PC-3 (cell line): ENCODE measurements at regions of chr4 and their contacts with region 1.

Region 1: DNA sequence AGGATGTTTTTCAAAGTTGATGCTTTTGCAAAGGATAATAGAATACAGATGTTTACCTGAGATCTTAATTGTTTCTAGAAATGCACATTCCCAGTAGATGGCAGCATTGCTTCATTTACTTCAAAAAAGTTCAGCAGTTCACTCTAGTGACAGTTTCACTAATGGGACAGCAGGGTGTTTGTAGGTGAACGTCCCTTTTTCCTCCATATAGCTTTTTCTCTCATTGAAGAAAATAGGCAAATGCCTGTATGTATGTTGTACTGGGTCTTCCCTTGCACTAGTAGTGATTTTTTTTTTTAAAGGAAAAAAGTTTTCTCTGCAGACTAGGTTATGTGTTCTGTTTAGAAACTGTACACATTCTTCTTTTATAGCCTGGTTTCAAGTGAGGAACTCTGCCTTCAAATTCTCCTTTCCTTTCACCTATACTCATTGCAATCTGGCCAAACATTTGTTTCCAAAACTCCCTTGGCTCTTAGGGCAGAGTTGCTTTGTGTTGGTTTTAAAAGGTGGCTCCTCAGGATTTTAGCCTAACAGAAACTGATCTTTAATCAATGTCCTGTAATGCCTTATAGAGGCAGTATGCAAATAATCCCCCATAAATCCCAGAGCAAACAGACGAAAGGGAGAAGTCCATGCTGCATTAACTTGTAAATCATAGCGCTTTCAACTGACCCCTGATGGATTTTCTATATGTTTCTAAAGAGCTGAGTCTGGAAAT is 86.3 kb downstream of the EGF start:
- DNase-seq: peak; percentile 75
- ATAC-seq: peak; percentile 70
- H3K4me3 ChIP-seq: no peak overlapping the region
- H3K27ac ChIP-seq: no peak overlapping the region
- H3K4me1 ChIP-seq: no peaks in the 10 kb centered on the region
- H3K27me3 ChIP-seq: no peaks in the 10 kb centered on the region
- CTCF ChIP-seq: peak; percentile 71

Region 2: DNA sequence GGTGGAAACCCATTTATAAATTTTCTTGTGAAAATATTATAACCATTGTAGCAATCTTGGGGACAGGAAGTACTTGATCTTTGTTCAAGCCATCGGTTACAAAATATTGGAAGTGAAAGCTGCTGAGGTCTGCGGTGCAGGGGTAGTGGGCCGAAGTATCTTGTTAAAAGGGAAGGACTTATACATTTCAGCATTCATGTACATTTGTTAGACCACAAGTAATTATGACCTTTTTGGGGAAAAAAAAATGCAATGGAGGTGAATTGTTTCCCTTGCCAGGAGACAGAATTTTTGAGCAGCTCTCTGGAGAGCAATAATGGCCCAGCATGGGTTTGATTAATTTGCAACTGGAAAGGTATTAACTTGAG is 35.0 kb after region 1 on chr4:
- CTCF ChIA-PET with region 1: no interaction called
- POLR2A ChIA-PET with region 1: no interaction called
- intact Hi-C with region 1: no loop called
- DNase-seq: no peak
- ATAC-seq: no peak
- H3K4me3 ChIP-seq: no peak overlapping the region
- H3K27ac ChIP-seq: no peak overlapping the region
- H3K4me1 ChIP-seq: no peaks in the 10 kb centered on the region
- H3K27me3 ChIP-seq: no peaks in the 10 kb centered on the region
- CTCF ChIP-seq: no peak

Region 3: GRCh38 chr4:110510955-110511544 is 512.0 kb after region 1 on chr4:
- CTCF ChIA-PET with region 1: interaction called, 3 read pairs
- POLR2A ChIA-PET with region 1: no interaction called
- intact Hi-C with region 1: loop called (anchors 1 kb)
- DNase-seq: peak; percentile 70
- ATAC-seq: peak; percentile 59; the same call in 1 of the 2 replicates
- H3K4me3 ChIP-seq: no peak overlapping the region
- H3K27ac ChIP-seq: no peak overlapping the region
- H3K4me1 ChIP-seq: no peaks in the 10 kb centered on the region
- H3K27me3 ChIP-seq: no peaks in the 10 kb centered on the region
- CTCF ChIP-seq: peak; percentile 67

Region 4: GRCh38 chr4:110516106-110516922 is 517.3 kb after region 1 on chr4:
- CTCF ChIA-PET with region 1: no interaction called
- POLR2A ChIA-PET with region 1: no interaction called
- intact Hi-C with region 1: loop called (anchors 1 kb)
- DNase-seq: peak; percentile 78
- ATAC-seq: peak; percentile 97
- H3K4me3 ChIP-seq: peak overlapping the region; percentile 76
- H3K27ac ChIP-seq: no peak overlapping the region
- H3K4me1 ChIP-seq: no peaks in the 10 kb centered on the region
- H3K27me3 ChIP-seq: no peaks in the 10 kb centered on the region
- CTCF ChIP-seq: peak; percentile 78

Region 5: GRCh38 chr4:110586131-110586850 is 587.3 kb after region 1 on chr4:
- CTCF ChIA-PET with region 1: interaction called, 4 read pairs
- POLR2A ChIA-PET with region 1: no interaction called
- intact Hi-C with region 1: loop called (anchors 2 kb)
- DNase-seq: peak; percentile 72
- ATAC-seq: peak; percentile 78
- H3K4me3 ChIP-seq: peak overlapping the region; percentile 55; the same call in 1 of the 2 replicates
- H3K27ac ChIP-seq: no peak overlapping the region
- H3K4me1 ChIP-seq: no peaks in the 10 kb centered on the region
- H3K27me3 ChIP-seq: no peaks in the 10 kb centered on the region
- CTCF ChIP-seq: peak; percentile 66